CD8-positive, alpha-beta T cell (primary cell): ENCODE measurements at regions of chr22 and their contacts with region 1.

Region 1: DNA sequence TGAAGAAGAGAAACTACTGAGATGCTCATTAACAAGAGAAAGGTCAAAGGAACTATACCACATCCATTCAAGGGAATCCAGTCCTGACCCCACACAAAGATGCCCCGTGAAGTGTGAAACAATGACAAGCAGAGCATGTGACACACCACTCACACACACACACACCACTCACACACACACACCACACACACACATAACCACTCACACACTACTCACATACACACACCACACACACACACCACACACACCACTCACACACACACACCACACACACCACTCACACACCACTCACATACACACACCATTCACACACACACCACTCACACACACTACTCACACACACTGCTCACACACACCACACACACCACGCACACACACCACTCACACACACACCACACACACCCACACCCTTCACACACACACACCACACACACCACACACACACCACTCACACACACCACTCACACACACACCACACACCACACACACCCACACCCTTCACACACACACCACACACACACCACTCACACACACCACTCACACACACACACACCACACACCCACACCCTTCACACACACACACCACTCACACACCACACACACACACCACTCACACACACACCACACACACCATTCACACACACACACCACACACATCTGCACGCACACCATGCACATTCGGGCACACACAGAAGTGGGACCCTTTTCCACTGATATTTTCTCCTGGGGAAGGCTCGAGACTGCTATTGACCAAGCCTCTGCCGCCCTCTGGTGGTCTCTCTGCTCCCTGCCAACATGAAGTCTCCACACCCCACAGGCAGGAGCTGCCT is 32.0 kb upstream of the COMT start:
- DNase-seq: peak; percentile 71 to 91 (median 84)
- ATAC-seq: peak; percentile 91
- H3K4me3 ChIP-seq: no peak overlapping the region
- H3K4me3 Mint-ChIP-seq: no peak overlapping the region
- H3K27ac ChIP-seq: peak overlapping the region in 1 of 2 experiments; percentile 6
- H3K27ac Mint-ChIP-seq: peak overlapping the region; percentile 28
- H3K4me1 ChIP-seq: peaks cover 8% of the 10 kb centered on the region
- H3K4me1 Mint-ChIP-seq: peaks cover 4% of the 10 kb centered on the region
- H3K27me3 ChIP-seq: no peaks in the 10 kb centered on the region
- H3K27me3 Mint-ChIP-seq: no peaks in the 10 kb centered on the region
- CTCF ChIP-seq: peak; percentile 69

Region 2: GRCh38 chr22:19745155-19746101 is 164.1 kb before region 1 on chr22:
- CTCF ChIA-PET with region 1: interaction called, 14 read pairs
- POLR2A ChIA-PET with region 1: no interaction called
- intact Hi-C with region 1: no loop called
- DNase-seq: no peak
- ATAC-seq: no peak
- H3K4me3 ChIP-seq: no peak overlapping the region
- H3K4me3 Mint-ChIP-seq: no peak overlapping the region
- H3K27ac ChIP-seq: no peak overlapping the region
- H3K27ac Mint-ChIP-seq: no peak overlapping the region
- H3K4me1 ChIP-seq: no peaks in the 10 kb centered on the region
- H3K4me1 Mint-ChIP-seq: no peaks in the 10 kb centered on the region
- H3K27me3 ChIP-seq: no peaks in the 10 kb centered on the region
- H3K27me3 Mint-ChIP-seq: no peaks in the 10 kb centered on the region
- CTCF ChIP-seq: no peak

Region 3: GRCh38 chr22:19756288-19757128 is 153.1 kb before region 1 on chr22:
- CTCF ChIA-PET with region 1: interaction called, 23 read pairs
- POLR2A ChIA-PET with region 1: no interaction called
- intact Hi-C with region 1: loop called in 1 of 2 experiments (anchors 1 kb)
- DNase-seq: peak; percentile 37 to 82 (median 67)
- ATAC-seq: peak; percentile 72
- H3K4me3 ChIP-seq: peak overlapping the region; percentile 15 to 17
- H3K4me3 Mint-ChIP-seq: peak overlapping the region; percentile 74
- H3K27ac ChIP-seq: no peak overlapping the region
- H3K27ac Mint-ChIP-seq: no peak overlapping the region
- H3K4me1 ChIP-seq: peaks cover 26% of the 10 kb centered on the region
- H3K4me1 Mint-ChIP-seq: peaks cover 31% of the 10 kb centered on the region
- H3K27me3 ChIP-seq: peaks cover 24 to 38% of the 10 kb centered on the region in 2 experiments
- H3K27me3 Mint-ChIP-seq: peaks cover 49% of the 10 kb centered on the region
- CTCF ChIP-seq: peak; percentile 37

Region 4: DNA sequence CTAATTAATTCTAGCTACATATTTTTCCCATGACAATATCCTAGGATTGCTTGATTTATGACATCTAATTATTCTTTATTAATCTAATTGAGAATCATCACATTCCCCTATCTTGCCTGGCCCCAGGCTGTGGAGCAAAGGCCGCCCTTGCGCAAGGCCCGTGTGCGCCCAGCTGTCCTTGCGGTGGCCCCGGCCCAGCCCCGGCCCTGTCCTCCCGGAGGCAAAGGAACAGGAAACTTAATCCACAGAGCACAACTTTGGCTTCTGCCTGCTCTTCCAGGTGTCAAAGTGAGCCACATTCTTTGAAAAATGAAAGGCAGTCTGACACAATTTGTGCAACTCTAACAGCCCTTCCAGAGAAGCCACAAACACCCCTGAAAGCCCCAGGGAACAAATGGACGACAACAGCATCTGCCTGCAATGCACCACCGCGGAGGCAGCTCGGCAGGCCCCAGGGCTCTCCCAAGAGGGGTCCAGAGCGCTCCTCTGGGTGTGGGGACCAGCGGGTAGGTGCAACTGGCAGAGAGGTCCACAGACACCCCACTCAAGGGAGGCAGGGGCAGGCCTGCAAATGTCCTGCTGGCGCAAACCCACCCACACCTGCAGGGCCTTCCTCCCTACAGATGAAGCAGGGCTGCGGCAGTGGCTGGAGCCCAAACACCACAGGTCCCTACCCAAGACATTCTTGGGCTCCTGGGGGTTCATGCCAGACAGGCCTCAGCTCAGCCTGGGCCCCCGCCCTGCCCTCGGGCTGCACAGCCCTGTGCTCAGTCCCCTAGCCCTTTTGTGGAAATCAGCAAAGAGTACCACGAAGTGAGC is 85.2 kb before region 1 on chr22:
- CTCF ChIA-PET with region 1: no interaction called
- POLR2A ChIA-PET with region 1: no interaction called
- intact Hi-C with region 1: loop called (anchors 5 to 10 kb)
- DNase-seq: peak in 1 of 9 experiments; percentile 40
- ATAC-seq: no peak
- H3K4me3 ChIP-seq: no peak overlapping the region
- H3K4me3 Mint-ChIP-seq: no peak overlapping the region
- H3K27ac ChIP-seq: no peak overlapping the region
- H3K27ac Mint-ChIP-seq: no peak overlapping the region
- H3K4me1 ChIP-seq: no peaks in the 10 kb centered on the region
- H3K4me1 Mint-ChIP-seq: peaks cover 3% of the 10 kb centered on the region
- H3K27me3 ChIP-seq: no peaks in the 10 kb centered on the region
- H3K27me3 Mint-ChIP-seq: no peaks in the 10 kb centered on the region
- CTCF ChIP-seq: no peak

Region 5: DNA sequence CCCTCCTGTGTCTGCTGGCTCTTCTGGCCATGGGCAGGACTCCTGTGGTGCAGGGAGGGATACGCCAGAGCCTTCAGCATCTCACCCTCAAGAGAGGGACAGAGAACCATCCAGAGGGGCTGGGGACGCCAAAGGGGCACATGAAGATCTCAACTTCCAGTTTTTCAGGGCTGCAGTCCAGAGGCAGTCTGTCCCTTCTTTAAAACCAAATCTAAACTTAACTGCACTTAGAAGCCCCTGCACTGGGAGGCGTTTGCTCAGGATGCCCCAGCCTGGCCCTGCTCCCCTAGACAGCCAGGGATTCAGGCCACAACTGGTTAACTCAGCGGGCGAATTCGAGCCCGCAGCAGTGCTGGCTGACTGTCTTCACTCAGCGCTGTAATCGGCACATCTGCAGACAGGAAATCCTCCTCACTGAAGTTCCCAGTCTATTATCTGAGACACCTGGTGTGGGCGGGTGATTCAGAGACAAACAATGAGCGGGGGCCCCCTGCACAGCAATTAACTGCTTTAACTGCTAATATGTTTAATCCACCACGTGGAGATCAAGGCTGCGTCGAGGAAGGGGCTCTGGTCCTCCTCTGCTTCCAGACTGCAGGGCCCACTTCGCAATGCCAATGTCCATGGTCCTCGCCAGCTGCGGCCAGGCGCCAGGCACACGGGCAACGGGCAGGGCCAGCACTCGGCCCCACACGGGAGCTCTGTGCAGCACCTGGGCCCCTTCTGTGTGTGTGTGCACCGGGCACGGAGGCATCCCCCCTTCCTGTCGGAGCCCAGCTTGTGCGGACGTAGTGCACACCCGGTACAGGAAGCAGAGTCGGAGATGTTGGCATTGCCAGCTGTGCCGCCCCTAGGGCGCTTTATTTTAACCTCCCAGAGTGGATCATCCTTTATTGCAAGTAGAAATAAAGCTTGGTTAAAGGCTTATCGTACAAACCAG is 18.0 kb before region 1 on chr22:
- CTCF ChIA-PET with region 1: interaction called, 19 read pairs
- POLR2A ChIA-PET with region 1: interaction called, 7 read pairs
- intact Hi-C with region 1: no loop called
- DNase-seq: peak; percentile 66 to 89 (median 82)
- ATAC-seq: peak; percentile 77
- H3K4me3 ChIP-seq: peak overlapping the region; percentile 45 to 55
- H3K4me3 Mint-ChIP-seq: peak overlapping the region; percentile 85
- H3K27ac ChIP-seq: peak overlapping the region; percentile 72 to 82
- H3K27ac Mint-ChIP-seq: peak overlapping the region; percentile 99
- H3K4me1 ChIP-seq: peaks cover 88% of the 10 kb centered on the region
- H3K4me1 Mint-ChIP-seq: peaks cover 90% of the 10 kb centered on the region
- H3K27me3 ChIP-seq: no peaks in the 10 kb centered on the region
- H3K27me3 Mint-ChIP-seq: no peaks in the 10 kb centered on the region
- CTCF ChIP-seq: no peak

Region 6: GRCh38 chr22:19896665-19897355 is 12.8 kb before region 1 on chr22:
- CTCF ChIA-PET with region 1: interaction called, 19 read pairs
- POLR2A ChIA-PET with region 1: interaction called, 7 read pairs
- intact Hi-C with region 1: no loop called
- DNase-seq: peak in 7 of 9 experiments; percentile 24 to 69 (median 43)
- ATAC-seq: peak; percentile 17
- H3K4me3 ChIP-seq: no peak overlapping the region
- H3K4me3 Mint-ChIP-seq: no peak overlapping the region
- H3K27ac ChIP-seq: no peak overlapping the region
- H3K27ac Mint-ChIP-seq: peak overlapping the region; percentile 99
- H3K4me1 ChIP-seq: peaks cover 57% of the 10 kb centered on the region
- H3K4me1 Mint-ChIP-seq: peaks cover 55% of the 10 kb centered on the region
- H3K27me3 ChIP-seq: no peaks in the 10 kb centered on the region
- H3K27me3 Mint-ChIP-seq: no peaks in the 10 kb centered on the region
- CTCF ChIP-seq: no peak